Dorsolateral prefrontal cortex (tissue), 120 donors: ENCODE measurements at regions of chr10 and their contacts with region 1.

Region 1: GRCh38 chr10:14478604-14479003 is 147.9 kb upstream of the FRMD4A start:
- DNase-seq: peak; percentile 46 to 88 (median 80)
- H3K4me3 ChIP-seq: peak overlapping the region in 11 of 59 donors; percentile 1 to 37 (median 10)
- H3K27ac ChIP-seq: peak overlapping the region in 29 of 59 donors; percentile 5 to 97 (median 44)
- H3K27me3 ChIP-seq: no peaks in the 10 kb centered on the region
- CTCF ChIP-seq: peak; percentile 46 to 94 (median 84)

Region 2: DNA sequence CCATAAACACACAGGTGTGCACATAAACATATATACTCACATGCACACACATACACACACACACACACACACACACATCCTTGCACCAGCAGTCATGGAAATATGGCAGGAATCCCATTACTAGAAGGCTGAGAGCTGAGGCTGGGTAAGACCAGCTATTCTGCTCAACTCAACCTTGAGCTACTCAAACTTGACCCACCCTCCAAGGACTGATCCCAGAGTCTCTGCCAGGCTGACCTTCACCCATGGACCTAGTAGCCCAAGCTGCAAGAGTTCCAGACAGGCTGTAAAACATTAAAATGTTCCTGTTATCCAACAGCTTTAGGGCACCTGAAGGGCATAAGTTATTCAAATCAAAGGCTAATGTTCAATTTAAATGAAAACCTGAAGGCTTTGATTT is 282.5 kb before region 1 on chr10:
- intact Hi-C with region 1: loop called (anchors 2 kb)
- DNase-seq: no peak
- H3K4me3 ChIP-seq: no peak overlapping the region
- H3K27ac ChIP-seq: no peak overlapping the region
- H3K27me3 ChIP-seq: peaks cover 0 to 16% (median 0%) of the 10 kb centered on the region in 45 donors
- CTCF ChIP-seq: no peak

Region 3: DNA sequence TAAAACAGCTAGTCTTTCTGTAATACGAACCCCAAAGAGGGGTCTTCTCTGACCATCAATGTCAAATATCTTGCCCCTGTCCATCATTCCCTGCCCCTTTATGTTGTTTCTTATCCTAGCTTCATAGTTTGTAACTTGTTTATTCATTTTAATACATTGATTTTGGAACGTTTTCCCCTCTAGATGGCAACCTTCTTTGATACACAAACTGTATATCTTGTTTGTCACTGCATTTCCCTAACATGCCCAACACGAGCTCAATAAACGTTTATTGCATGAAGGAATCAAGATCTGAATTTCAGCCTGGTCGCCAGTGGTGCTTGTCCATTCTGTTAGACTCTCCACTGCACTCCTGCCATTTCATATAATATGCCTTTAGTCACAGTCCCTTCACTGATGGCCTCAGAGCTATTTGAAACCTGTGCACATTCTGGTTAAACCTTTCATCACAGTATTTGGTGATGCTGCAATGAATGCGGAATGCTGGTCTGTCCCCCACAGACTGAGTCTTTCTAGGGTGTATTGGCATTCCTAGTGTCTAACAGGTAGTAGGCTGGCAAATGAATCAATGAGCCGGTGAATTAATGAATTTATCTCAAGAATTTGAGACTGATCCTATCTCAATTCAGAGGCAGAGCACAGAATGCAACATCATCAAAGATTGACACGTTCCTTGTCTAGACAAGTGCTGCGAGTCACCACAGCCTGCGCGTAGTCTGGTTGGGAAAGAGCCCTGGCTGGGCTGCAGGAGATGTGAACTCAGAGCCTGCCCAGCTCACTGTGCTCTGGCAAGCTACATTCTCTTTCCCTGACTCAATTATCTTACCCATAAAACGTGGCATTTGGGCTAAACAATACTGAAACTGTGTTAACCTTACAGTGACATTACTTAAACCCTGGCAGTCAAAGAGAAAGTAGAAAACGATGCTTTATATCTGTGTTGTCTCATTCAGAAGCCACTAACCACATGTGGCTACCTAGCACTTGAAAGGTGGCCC is 92.7 kb before region 1 on chr10:
- intact Hi-C with region 1: loop called in 1 of 2 experiments (anchors 2 kb)
- DNase-seq: no peak
- H3K4me3 ChIP-seq: no peak overlapping the region
- H3K27ac ChIP-seq: peak overlapping the region in 1 of 59 donors; percentile 36
- H3K27me3 ChIP-seq: no peaks in the 10 kb centered on the region
- CTCF ChIP-seq: peak in 48 of 56 donors; percentile 7 to 63 (median 36)

Region 4: GRCh38 chr10:14397066-14397465 is 81.5 kb before region 1 on chr10:
- intact Hi-C with region 1: loop called in 1 of 2 experiments (anchors 5 kb)
- DNase-seq: peak in 9 of 10 donors; percentile 68 to 89 (median 85)
- H3K4me3 ChIP-seq: no peak overlapping the region
- H3K27ac ChIP-seq: peak overlapping the region in 50 of 59 donors; percentile 7 to 81 (median 55)
- H3K27me3 ChIP-seq: no peaks in the 10 kb centered on the region
- CTCF ChIP-seq: peak in 1 of 56 donors; percentile 16